MCF 10A (cell line): ENCODE measurements at regions of chr1 and their contacts with region 1.

Region 1: GRCh38 chr1:171984850-171985485 is 143.7 kb downstream of the DNM3 start:
- DNase-seq: peak; percentile 52
- H3K4me3 Mint-ChIP-seq: no peak overlapping the region
- H3K27ac Mint-ChIP-seq: no peak overlapping the region
- H3K4me1 Mint-ChIP-seq: no peaks in the 10 kb centered on the region
- H3K27me3 Mint-ChIP-seq: no peaks in the 10 kb centered on the region
- CTCF ChIP-seq: peak; percentile 85

Region 2: GRCh38 chr1:171485375-171486047 is 499.5 kb before region 1 on chr1 and contains the start of gene PRRC2C:
- CTCF ChIA-PET with region 1: interaction called, 4 read pairs
- POLR2A ChIA-PET with region 1: no interaction called
- intact Hi-C with region 1: loop called (anchors 10 kb)
- DNase-seq: peak; percentile 100
- H3K4me3 Mint-ChIP-seq: peak within 1 kb of the TSS; percentile 80
- H3K27ac Mint-ChIP-seq: peak within 1 kb of the TSS; percentile 92
- H3K4me1 Mint-ChIP-seq: peaks cover 38% of the 10 kb centered on the region
- H3K27me3 Mint-ChIP-seq: no peaks in the 10 kb centered on the region
- CTCF ChIP-seq: peak; percentile 71
- total RNA-seq, gene PRRC2C: 296 and 298 TPM in 2 replicates

Region 3: DNA sequence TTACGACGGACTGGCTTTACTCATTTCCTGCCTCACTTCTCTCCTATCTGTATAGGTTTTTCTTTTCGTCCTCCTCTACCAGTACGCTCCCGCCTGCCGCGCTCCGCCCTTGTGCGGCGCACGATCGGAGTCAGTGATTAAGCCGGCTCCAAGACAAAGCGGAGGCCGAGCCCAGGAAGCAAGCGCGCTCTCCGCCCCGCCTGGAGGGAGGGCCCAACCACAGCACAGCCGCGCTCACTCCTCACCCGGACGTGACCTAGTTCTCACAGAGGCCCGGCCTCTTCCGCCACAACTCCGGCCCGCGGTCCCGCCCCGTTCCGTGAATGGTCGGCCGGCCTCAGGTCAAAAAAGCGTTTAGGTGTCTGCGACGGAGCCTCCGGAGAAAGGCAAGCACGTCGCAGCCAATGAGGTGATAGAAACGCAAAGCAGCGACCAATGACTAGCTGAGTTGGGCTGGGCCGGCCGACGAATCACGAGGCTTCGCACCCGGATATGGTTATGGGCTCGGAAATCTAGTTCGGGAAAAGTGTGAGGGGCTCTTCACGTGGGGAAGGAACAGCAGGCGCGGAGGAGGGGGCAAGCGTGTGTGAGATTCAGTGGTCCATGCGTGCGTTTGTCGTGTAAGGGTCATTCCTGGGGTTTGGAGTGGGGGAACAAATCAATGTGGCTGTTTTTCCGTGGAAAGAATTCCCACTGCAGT is 203.6 kb before region 1 on chr1 and contains the start of gene METTL13:
- CTCF ChIA-PET with region 1: interaction called, 1,502 read pairs
- POLR2A ChIA-PET with region 1: interaction called, 7 read pairs
- intact Hi-C with region 1: no loop called
- DNase-seq: peak; percentile 100
- H3K4me3 Mint-ChIP-seq: peak within 1 kb of the TSS; percentile 84
- H3K27ac Mint-ChIP-seq: peak within 1 kb of the TSS; percentile 95
- H3K4me1 Mint-ChIP-seq: peaks cover 28% of the 10 kb centered on the region
- H3K27me3 Mint-ChIP-seq: no peaks in the 10 kb centered on the region
- CTCF ChIP-seq: no peak
- total RNA-seq, gene METTL13: 30.7 and 39.1 TPM in 2 replicates

Region 4: DNA sequence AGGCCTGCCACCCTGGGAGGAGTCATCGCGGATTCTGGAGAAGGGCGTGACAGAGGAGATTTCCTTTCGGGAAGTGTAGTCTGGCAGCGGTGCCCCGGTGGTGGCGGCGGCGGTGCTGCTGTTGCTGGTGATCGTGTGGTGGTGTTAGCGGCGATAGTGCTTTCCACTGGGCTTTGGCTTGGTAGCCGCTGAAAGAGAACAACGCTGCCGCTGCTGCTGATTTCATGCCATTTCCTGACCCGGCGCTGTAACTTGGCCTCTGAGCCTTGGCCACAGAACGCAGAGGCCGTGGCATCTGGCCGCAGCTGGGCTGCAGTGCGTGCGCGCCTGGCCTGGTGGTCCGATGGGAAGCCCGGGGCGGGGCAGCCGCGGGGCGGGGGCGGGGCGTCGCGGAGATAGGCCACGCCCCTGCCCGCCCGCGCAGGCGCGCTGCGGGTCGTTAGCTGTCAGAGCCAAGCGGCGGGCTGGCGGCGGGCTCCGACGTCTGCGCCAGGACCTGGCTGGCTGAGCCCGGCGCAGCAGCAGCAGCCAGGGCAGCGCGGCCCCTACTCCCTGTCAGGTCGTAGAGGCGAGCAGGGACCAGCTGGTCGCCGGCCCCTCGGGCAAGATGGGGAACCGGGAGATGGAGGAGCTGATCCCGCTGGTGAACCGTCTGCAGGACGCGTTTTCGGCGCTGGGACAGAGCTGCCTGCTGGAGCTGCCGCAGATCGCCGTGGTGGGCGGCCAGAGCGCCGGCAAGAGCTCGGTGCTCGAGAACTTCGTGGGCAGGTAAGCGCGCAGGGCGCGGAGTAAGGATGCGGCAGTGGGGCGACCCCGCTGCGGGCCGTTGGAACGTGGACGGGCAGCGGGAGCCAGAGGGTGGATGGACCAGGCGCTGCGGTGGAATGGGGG is 143.7 kb before region 1 on chr1 and contains the start of gene DNM3:
- CTCF ChIA-PET with region 1: interaction called, 52 read pairs
- POLR2A ChIA-PET with region 1: interaction called, 4 read pairs
- intact Hi-C with region 1: no loop called
- DNase-seq: peak; percentile 74
- H3K4me3 Mint-ChIP-seq: peak within 1 kb of the TSS; percentile 71
- H3K27ac Mint-ChIP-seq: peak within 1 kb of the TSS; percentile 73
- H3K4me1 Mint-ChIP-seq: peaks cover 16% of the 10 kb centered on the region
- H3K27me3 Mint-ChIP-seq: peaks cover 33% of the 10 kb centered on the region
- CTCF ChIP-seq: no peak
- total RNA-seq, gene DNM3: 0.44 and 0.68 TPM in 2 replicates

Region 5: DNA sequence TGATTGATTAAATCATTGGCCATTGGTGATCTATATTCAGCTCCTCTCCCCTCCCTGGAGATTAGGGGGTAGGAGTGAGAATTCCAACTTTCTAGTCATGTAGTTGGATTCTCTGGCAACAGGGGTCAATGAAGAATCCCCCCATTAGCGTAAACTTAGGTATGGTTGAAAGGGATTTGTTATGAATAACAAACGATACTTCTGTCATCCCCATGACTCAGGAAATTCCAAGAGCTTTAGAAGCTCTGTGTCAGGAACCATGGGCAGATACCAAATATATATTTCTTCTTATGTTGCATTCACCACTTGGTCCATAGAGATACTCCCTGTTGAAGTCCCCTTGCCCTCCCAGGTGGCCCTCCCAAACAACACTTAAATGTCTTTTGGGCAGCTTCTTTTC is 19.2 kb before region 1 on chr1:
- CTCF ChIA-PET with region 1: interaction called, 155 read pairs
- POLR2A ChIA-PET with region 1: no interaction called
- intact Hi-C with region 1: no loop called
- DNase-seq: no peak
- H3K4me3 Mint-ChIP-seq: no peak overlapping the region
- H3K27ac Mint-ChIP-seq: no peak overlapping the region
- H3K4me1 Mint-ChIP-seq: no peaks in the 10 kb centered on the region
- H3K27me3 Mint-ChIP-seq: no peaks in the 10 kb centered on the region
- CTCF ChIP-seq: no peak

Region 6: GRCh38 chr1:172417552-172417951 is 432.6 kb after region 1 on chr1:
- CTCF ChIA-PET with region 1: interaction called, 16 read pairs
- POLR2A ChIA-PET with region 1: no interaction called
- intact Hi-C with region 1: no loop called
- DNase-seq: peak; percentile 30
- H3K4me3 Mint-ChIP-seq: no peak overlapping the region
- H3K27ac Mint-ChIP-seq: no peak overlapping the region
- H3K4me1 Mint-ChIP-seq: peaks cover 7% of the 10 kb centered on the region
- H3K27me3 Mint-ChIP-seq: no peaks in the 10 kb centered on the region
- CTCF ChIP-seq: no peak